ENCODE measurements at regions of chr6 and their contacts with region 1.

Region 1: DNA sequence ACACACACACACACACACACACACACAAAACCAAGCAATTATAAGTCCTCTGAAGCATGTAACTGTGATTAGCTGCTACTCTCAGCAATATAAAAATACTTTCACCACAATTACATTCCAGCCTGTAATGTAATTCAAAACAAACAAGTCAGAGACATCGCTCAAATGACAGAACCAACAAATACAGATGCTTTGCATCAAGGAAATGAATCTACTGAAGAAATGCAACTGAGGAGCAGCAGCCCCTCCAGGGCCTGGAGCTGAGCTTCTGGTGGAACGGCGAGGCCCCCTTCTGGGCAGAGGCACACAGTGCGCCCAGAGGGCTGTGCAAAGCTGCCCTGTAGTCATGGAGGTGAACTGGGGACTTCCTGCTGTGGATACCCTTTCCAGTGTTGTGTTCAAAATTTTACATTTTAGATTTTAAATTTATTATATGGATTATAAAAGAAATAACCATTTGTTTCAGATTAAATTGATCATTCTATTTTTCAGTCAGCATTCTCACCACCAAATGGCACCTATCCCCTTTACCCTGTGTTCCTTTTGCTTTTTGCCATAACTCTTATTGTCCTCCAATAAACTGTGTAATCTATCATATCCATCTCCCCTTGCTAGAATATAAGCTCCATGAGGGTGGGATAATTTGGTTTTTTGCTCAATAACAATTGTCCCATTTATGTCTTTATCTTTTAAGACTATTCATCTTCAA is 23.2 kb downstream of the ADAT2 start:
- DNase-seq: peak; percentile 60 to 89 (median 88)
- ATAC-seq: peak; percentile 96
- H3K4me3 ChIP-seq: no peak overlapping the region
- H3K27ac ChIP-seq: no peak overlapping the region
- H3K4me1 ChIP-seq: no peaks in the 10 kb centered on the region
- H3K27me3 ChIP-seq: no peaks in the 10 kb centered on the region

Region 2: DNA sequence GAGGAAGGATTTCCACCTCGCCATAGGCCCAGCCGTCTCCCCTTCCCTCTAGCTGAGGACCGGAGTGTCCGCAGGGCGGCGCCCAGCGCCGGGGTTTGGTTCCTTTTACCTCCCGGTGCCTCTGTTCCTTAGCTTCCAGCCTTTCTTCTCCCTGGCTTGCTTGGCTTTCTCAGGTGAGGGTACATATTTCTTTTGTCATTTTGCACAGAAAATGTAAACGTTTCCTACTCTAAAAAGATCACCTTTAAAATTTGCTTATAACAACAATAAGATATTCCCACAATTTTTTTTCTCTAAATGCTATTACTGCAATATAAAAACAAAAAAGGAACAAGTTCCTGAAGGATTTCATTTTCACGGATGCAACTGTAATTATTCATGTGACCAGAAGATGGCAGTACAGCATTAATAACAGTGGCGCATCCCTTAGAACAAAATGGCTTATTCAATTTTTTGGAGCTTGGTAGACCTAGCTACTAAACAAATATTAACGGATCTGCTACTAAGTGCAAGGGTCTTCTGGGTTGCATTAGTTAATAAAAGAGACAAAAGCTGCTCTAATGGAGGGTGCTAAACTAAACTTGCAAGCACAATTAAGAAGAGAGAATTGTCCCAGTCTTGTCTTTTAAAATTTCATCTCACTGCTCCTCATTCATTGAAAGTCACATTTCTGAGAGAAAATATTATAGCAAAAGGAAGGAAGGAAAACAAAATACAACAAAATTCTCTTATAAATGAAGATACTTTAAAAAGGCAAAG is 952.6 kb before region 1 on chr6:
- intact Hi-C with region 1: loop called in 3 of 4 experiments (anchors 10 kb)
- DNase-seq: peak in 1 of 3 donors; percentile 36
- ATAC-seq: peak in 1 of 2 donors; percentile 37
- H3K4me3 ChIP-seq: no peak overlapping the region
- H3K27ac ChIP-seq: no peak overlapping the region
- H3K4me1 ChIP-seq: no peaks in the 10 kb centered on the region
- H3K27me3 ChIP-seq: no peaks in the 10 kb centered on the region

Region 3: GRCh38 chr6:143187238-143187923 is 239.9 kb before region 1 on chr6:
- intact Hi-C with region 1: no loop called
- DNase-seq: peak in 1 of 3 donors; percentile 48
- ATAC-seq: peak; percentile 51 to 55
- H3K4me3 ChIP-seq: no peak overlapping the region
- H3K27ac ChIP-seq: no peak overlapping the region
- H3K4me1 ChIP-seq: peaks cover 4% of the 10 kb centered on the region
- H3K27me3 ChIP-seq: no peaks in the 10 kb centered on the region

Region 4: GRCh38 chr6:143457563-143458359 is 30.5 kb after region 1 on chr6:
- intact Hi-C with region 1: no loop called
- DNase-seq: no peak
- ATAC-seq: no peak
- H3K4me3 ChIP-seq: no peak overlapping the region
- H3K27ac ChIP-seq: no peak overlapping the region
- H3K4me1 ChIP-seq: no peaks in the 10 kb centered on the region
- H3K27me3 ChIP-seq: no peaks in the 10 kb centered on the region

Region 5: GRCh38 chr6:143516690-143517446 is 89.6 kb after region 1 on chr6:
- intact Hi-C with region 1: no loop called
- DNase-seq: no peak
- ATAC-seq: no peak
- H3K4me3 ChIP-seq: no peak overlapping the region
- H3K27ac ChIP-seq: no peak overlapping the region
- H3K4me1 ChIP-seq: peaks cover 3% of the 10 kb centered on the region
- H3K27me3 ChIP-seq: no peaks in the 10 kb centered on the region

Region 6: DNA sequence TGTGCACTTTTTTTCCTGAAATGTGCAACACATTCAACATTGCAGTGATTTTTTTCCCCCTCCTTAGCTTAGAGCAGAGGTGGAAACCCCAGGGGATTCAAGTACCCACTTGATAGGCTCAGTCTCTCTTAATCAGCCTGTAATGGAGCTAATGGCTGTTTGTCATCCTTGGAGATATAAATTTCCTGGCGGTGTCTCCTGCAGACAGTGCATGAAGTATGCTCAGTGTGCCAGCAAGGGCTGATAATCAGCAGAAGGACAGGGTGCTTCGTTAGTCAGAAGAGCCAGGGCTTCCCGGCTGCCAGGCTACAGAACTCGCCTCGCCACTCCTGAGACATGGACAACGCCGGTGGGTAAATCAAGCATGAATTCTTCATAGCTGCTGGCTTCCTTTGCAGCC is 180.7 kb after region 1 on chr6:
- intact Hi-C with region 1: no loop called
- DNase-seq: no peak
- ATAC-seq: peak; percentile 26 to 51
- H3K4me3 ChIP-seq: peak overlapping the region; percentile 57
- H3K27ac ChIP-seq: peak overlapping the region; percentile 43
- H3K4me1 ChIP-seq: no peaks in the 10 kb centered on the region
- H3K27me3 ChIP-seq: no peaks in the 10 kb centered on the region

Measured in right cardiac atrium (tissue), 5 donors.